Ascending aorta (tissue), 2 donors: ENCODE measurements at regions of chr4 and their contacts with region 1.

Region 1: GRCh38 chr4:168074861-168075260 is 17.5 kb upstream of the ANXA10 start:
- DNase-seq: no peak
- H3K4me3 ChIP-seq: no peak overlapping the region
- H3K27ac ChIP-seq: no peak overlapping the region
- H3K4me1 ChIP-seq: no peaks in the 10 kb centered on the region
- H3K27me3 ChIP-seq: no peaks in the 10 kb centered on the region
- CTCF ChIP-seq: no peak

Region 2: GRCh38 chr4:167622481-167623246 is 452.2 kb before region 1 on chr4:
- intact Hi-C with region 1: no loop called
- DNase-seq: no peak
- H3K4me3 ChIP-seq: no peak overlapping the region
- H3K27ac ChIP-seq: no peak overlapping the region
- H3K4me1 ChIP-seq: no peaks in the 10 kb centered on the region
- H3K27me3 ChIP-seq: no peaks in the 10 kb centered on the region
- CTCF ChIP-seq: peak in 2 of 3 experiments; percentile 28 to 46

Region 3: DNA sequence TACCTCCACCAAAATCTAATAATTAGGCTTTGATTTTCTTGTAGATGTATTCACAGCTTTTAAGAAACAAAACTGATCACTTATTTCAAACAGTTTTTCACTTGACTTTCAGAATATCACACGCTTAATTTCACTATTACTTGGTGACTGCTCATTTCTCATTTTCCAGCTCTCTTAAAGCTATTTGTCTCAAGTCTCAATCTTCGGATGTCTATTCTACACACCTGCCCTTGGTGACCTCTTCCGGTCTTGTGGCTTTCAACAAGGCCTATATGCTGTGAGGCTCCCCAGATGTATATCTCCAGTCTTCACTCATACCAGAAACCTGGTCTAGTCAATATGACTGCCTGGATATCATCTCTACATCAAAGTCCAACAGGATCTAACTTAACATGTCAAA is 17.4 kb before region 1 on chr4:
- intact Hi-C with region 1: loop called (anchors 1 kb)
- DNase-seq: no peak
- H3K4me3 ChIP-seq: no peak overlapping the region
- H3K27ac ChIP-seq: no peak overlapping the region
- H3K4me1 ChIP-seq: no peaks in the 10 kb centered on the region
- H3K27me3 ChIP-seq: no peaks in the 10 kb centered on the region
- CTCF ChIP-seq: no peak

Region 4: DNA sequence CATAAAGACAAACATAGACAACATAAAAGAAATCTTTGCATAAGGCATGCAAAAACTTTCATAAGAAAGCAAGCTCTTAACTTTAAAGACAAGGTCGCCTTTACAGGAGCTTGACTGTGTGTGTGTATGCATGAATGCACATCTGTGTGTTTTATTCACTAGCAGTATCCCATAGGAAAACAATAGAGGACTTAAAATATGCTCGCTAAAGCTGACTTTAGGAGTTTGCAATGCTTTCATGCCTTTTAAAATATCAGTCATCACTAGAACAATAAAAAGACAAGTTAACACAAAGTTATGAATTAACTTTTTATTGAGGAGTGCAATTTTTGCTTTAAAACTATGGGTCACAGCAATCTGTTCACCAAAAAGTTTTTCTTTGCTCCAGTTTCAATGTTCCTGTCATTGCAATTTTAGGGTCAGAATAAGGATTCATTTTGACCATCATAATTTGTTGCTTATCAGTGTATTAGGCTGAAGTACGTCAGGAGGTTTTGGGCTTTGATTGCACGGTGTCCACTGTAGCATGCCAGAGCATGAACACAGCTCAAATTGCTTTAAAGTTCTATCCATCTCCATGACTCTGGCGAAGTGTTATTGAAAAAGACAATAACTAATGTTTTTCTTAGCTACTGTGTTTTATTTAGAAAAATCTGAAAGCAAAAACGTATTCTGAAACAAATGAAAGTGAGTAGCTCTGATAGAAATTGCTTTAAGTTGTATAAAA is 54.3 kb after region 1 on chr4:
- intact Hi-C with region 1: no loop called
- DNase-seq: no peak
- H3K4me3 ChIP-seq: no peak overlapping the region
- H3K27ac ChIP-seq: no peak overlapping the region
- H3K4me1 ChIP-seq: no peaks in the 10 kb centered on the region
- H3K27me3 ChIP-seq: no peaks in the 10 kb centered on the region
- CTCF ChIP-seq: no peak

Region 5: DNA sequence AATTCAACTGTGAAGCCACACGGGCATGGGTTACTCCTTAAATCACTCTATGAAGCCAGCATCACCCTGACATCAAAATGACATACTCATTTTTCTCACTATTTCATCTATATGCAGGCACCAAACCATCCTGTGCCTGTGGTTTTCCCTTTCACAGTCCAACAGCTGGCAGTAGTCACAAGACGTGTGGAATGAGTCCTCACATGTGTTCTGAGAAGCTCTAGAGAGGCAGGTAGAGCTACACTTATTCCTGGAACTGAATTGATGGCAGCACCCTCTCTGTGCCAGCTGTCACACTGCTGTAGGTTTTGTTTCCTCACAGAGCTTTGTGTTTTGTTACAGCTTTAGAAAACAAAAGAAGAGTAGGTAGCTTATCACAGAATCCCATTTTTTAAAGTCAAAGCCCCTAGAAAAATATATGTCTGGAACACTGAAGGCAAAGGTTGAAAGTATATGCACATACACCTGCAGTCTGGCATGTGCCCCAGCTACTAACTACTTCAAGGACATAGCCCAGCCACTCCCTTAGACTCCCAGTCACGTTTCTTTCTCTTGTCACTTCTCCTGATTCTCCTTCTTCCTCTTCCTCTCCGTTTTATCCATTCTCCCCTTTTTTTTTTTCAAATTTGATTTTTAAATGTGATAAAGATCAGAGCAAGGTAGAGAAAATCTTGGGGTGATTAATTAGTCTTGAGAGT is 124.5 kb after region 1 on chr4:
- intact Hi-C with region 1: no loop called
- DNase-seq: no peak
- H3K4me3 ChIP-seq: no peak overlapping the region
- H3K27ac ChIP-seq: no peak overlapping the region
- H3K4me1 ChIP-seq: no peaks in the 10 kb centered on the region
- H3K27me3 ChIP-seq: no peaks in the 10 kb centered on the region
- CTCF ChIP-seq: no peak